ENCODE measurements at regions of chr15 and their contacts with region 1.

Region 1: GRCh38 chr15:42273102-42273899 is at the starts of genes GANC and TMEM87A:
- DNase-seq: peak; percentile 97 to 98 (median 98)
- ATAC-seq: peak; percentile 98 to 99 (median 98)
- H3K4me3 ChIP-seq: peak within 1 kb of the TSS; percentile 61 to 84 (median 68)
- H3K27ac ChIP-seq: peak within 1 kb of the TSS; percentile 90 to 99 (median 96)
- H3K4me1 ChIP-seq: peaks cover 11 to 57% (median 39%) of the 10 kb centered on the region in 12 donors
- H3K27me3 ChIP-seq: no peaks in the 10 kb centered on the region
- CTCF ChIP-seq: peak in 1 of 12 donors; percentile 14
- POLR2A ChIP-seq: peak in 1 of 2 donors; percentile 71
- total RNA-seq, gene GANC: 8.8 to 30.2 (median 17.4) TPM
- total RNA-seq, gene TMEM87A: 17.2 to 30.8 (median 19.9) TPM

Region 2: GRCh38 chr15:42444415-42445063 is 171.2 kb after region 1 on chr15:
- intact Hi-C with region 1: loop called in 1 of 10 experiments (anchors 10 kb)
- DNase-seq: no peak
- ATAC-seq: no peak
- H3K4me3 ChIP-seq: no peak overlapping the region
- H3K27ac ChIP-seq: no peak overlapping the region
- H3K4me1 ChIP-seq: peaks cover 0 to 20% (median 1%) of the 10 kb centered on the region in 12 donors
- H3K27me3 ChIP-seq: no peaks in the 10 kb centered on the region
- CTCF ChIP-seq: no peak
- POLR2A ChIP-seq: no peak

Region 3: GRCh38 chr15:42474827-42475226 is 201.5 kb after region 1 on chr15:
- intact Hi-C with region 1: loop called in 3 of 10 experiments (anchors 5 to 10 kb)
- DNase-seq: no peak
- ATAC-seq: no peak
- H3K4me3 ChIP-seq: no peak overlapping the region
- H3K27ac ChIP-seq: peak overlapping the region in 1 of 12 donors; percentile 50
- H3K4me1 ChIP-seq: peaks cover 0 to 33% (median 8%) of the 10 kb centered on the region in 12 donors
- H3K27me3 ChIP-seq: no peaks in the 10 kb centered on the region
- CTCF ChIP-seq: no peak
- POLR2A ChIP-seq: no peak

Region 4: GRCh38 chr15:42575188-42576039 is 302.1 kb after region 1 on chr15 and contains the start of gene STARD9:
- intact Hi-C with region 1: loop called in 1 of 10 experiments (anchors 5 kb)
- DNase-seq: peak; percentile 98 to 99 (median 99)
- ATAC-seq: peak; percentile 96 to 98 (median 97)
- H3K4me3 ChIP-seq: peak within 1 kb of the TSS; percentile 63 to 98 (median 86)
- H3K27ac ChIP-seq: peak within 1 kb of the TSS; percentile 83 to 96 (median 90)
- H3K4me1 ChIP-seq: peaks cover 0 to 50% (median 26%) of the 10 kb centered on the region in 12 donors
- H3K27me3 ChIP-seq: no peaks in the 10 kb centered on the region
- CTCF ChIP-seq: peak in 2 of 12 donors; percentile 5 to 37
- POLR2A ChIP-seq: peak in 1 of 2 donors; percentile 80
- total RNA-seq, gene STARD9: 4.3 to 10.3 (median 8.0) TPM

Measured in heart left ventricle (tissue), 16 donors.